ENCODE measurements at regions of chr17 and their contacts with region 1.

Region 1: GRCh38 chr17:41966463-41967140 is at the start of gene CNP:
- DNase-seq: peak; percentile 83 to 97 (median 94)

Region 2: GRCh38 chr17:41992576-41992975 is 26.0 kb after region 1 on chr17:
- intact Hi-C with region 1: loop called (anchors 2 kb)
- DNase-seq: peak in 41 of 42 donors; percentile 37 to 92 (median 82)

Region 3: DNA sequence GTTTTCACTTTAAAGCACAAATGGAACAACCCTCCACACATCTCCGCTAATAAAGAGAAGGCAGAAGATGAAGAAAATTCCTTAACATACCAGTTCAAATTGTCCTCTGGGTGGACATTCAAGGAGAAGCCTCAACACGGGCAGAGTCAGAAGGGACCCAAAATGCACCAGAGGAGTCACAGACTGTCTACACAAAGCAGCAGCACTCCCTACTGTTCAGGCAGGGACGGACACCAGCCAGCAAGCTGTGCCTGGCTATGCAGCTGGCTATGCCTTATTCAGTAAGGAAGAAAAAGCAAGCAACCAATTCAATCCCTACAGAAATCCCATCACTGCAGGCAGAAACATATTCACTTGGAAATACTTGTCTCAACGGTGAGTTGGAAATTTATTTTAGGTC is 42.6 kb after region 1 on chr17:
- intact Hi-C with region 1: loop called (anchors 1 kb)
- DNase-seq: peak; percentile 33 to 90 (median 81)

Region 4: DNA sequence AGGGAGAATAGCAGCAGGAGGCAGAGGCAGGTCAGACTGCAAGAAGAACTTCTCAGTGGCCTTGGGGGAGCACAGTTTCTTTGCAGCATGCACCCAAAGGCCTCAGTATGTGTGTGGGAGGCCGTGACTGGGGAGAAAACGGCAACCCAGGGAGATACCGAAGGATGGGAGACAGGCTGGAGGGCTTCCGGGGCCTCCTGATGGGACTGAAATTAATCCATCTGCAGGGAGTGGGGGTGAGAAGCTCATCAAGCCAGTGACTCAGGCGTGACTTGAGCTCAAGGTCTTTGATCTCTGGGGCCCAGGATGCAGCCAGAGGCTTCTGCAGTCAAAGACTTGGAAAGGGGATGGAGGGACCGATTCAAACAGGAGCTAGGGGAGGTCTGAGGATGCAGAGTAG is 88.9 kb after region 1 on chr17:
- intact Hi-C with region 1: no loop called
- DNase-seq: no peak

Region 5: DNA sequence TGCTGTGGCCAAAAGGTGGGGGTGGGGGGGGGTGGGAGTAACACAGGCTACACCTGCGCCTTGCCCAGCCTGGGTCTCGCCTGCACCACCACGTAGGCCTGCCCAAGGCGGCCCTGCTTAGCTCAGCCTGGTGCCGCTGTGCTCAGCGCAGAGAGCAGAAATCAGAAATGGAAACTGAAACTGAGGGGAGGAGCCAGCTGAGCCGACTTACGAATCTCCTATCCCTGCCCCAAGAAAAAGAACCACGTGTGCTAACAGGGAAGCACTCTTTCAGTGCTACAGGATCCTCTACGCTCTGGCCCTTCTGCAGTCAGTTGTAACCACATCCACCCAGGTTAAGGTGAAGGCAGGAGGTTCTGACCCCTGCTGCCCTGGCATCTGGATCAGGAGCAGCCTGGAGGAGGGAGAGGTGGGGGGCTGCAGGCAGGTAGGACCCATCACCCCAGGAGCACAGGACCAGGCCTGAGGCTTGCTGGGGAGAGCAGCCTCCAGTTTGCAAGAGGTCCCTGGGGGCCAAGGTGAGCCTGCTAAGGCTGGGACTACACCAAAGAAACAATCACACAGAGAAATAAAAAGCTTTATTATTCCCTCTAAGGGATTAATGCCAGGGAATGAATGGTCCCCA is 146.1 kb after region 1 on chr17 and contains the start of gene DHX58:
- intact Hi-C with region 1: loop called (anchors 10 kb)
- DNase-seq: peak; percentile 43 to 91 (median 74)

Region 6: DNA sequence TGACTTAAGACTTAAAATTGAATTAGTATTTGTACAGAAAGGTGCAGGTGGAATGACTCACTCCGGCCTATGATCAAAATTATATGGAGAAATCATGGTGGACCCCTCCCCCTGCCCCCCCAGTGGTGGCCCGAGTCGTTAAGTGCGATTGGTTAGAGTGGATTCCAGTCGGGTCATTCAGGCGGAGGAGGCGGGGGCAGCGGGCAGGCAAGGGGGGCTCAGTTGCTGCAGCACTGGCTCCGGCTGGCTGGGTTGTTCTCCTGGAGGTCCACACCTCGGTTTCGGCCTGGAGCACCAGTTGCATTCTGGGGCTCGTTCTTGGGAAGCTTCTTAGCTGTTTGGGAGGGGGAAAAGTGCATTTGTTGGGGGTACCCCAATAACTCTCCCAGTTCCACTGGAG is 159.0 kb after region 1 on chr17:
- intact Hi-C with region 1: no loop called
- DNase-seq: no peak

Measured in head of caudate nucleus (tissue), 42 donors.